ENCODE measurements at regions of chr16 and their contacts with region 1.

Region 1: GRCh38 chr16:20598832-20599469 is 22.8 kb upstream of the ACSM2B start:
- DNase-seq: no peak
- ATAC-seq: no peak
- H3K4me3 ChIP-seq: no peak overlapping the region
- H3K27ac ChIP-seq: no peak overlapping the region
- H3K4me1 ChIP-seq: no peaks in the 10 kb centered on the region
- H3K27me3 ChIP-seq: no peaks in the 10 kb centered on the region
- CTCF ChIP-seq: no peak
- EP300 ChIP-seq: no peak
- POLR2A ChIP-seq: no peak
- RAD21 ChIP-seq: no peak

Region 2: DNA sequence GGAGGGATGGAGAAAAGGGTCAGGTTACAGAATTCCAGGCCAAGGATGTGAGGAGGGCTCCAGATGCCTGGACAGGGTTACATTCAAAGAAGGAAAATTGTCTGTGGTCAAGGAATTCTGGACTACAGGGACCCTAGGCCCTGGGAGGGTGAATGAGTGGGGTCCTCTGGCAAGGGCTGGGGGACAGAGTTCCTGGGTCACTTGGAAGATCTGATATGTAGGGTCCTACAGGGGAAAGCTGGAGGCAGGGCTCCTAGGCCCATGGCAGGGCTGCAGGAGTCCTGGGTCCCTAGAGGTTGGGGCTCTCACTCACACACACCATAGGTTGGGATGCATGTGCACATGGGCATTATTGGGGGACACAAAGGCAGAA is 23.5 kb after region 1 on chr16:
- CTCF ChIA-PET with region 1: no interaction called
- POLR2A ChIA-PET with region 1: no interaction called
- RAD21 ChIA-PET with region 1: no interaction called
- SMC1A ChIA-PET with region 1: no interaction called
- in situ Hi-C with region 1: no loop called
- intact Hi-C with region 1: no loop called
- DNase-seq: no peak
- ATAC-seq: no peak
- H3K4me3 ChIP-seq: no peak overlapping the region
- H3K27ac ChIP-seq: no peak overlapping the region
- H3K4me1 ChIP-seq: no peaks in the 10 kb centered on the region
- H3K27me3 ChIP-seq: no peaks in the 10 kb centered on the region
- CTCF ChIP-seq: no peak
- EP300 ChIP-seq: no peak
- POLR2A ChIP-seq: no peak
- RAD21 ChIP-seq: no peak

Region 3: GRCh38 chr16:20689668-20690067 is 90.7 kb after region 1 on chr16:
- CTCF ChIA-PET with region 1: interaction called, 4 read pairs
- POLR2A ChIA-PET with region 1: no interaction called
- RAD21 ChIA-PET with region 1: no interaction called
- SMC1A ChIA-PET with region 1: no interaction called
- in situ Hi-C with region 1: no loop called
- intact Hi-C with region 1: loop called (anchors 5 kb)
- DNase-seq: no peak
- ATAC-seq: no peak
- H3K4me3 ChIP-seq: no peak overlapping the region
- H3K27ac ChIP-seq: no peak overlapping the region
- H3K4me1 ChIP-seq: no peaks in the 10 kb centered on the region
- H3K27me3 ChIP-seq: no peaks in the 10 kb centered on the region
- CTCF ChIP-seq: no peak
- EP300 ChIP-seq: no peak
- POLR2A ChIP-seq: no peak
- RAD21 ChIP-seq: no peak

Region 4: DNA sequence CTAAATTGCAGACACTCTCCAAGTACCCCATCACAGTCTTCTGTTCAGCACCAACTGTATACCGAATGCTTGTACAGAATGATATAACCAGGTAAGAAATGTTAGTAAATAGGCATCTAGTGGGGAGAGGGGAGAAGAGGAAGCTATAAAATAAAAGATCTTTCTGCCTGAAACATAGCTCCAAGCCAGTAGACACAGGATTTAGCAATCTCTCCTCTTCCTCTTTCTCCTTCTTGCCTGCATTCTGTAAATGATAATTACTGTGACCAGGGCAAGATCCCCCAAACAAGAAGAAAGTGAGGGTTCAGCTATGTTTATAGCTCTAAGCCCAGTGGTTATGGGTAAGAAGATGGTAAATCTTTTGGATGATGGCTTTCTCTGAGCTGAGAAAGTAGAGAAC is 182.7 kb after region 1 on chr16:
- CTCF ChIA-PET with region 1: no interaction called
- POLR2A ChIA-PET with region 1: no interaction called
- RAD21 ChIA-PET with region 1: no interaction called
- SMC1A ChIA-PET with region 1: no interaction called
- in situ Hi-C with region 1: no loop called
- intact Hi-C with region 1: no loop called
- DNase-seq: no peak
- ATAC-seq: no peak
- H3K4me3 ChIP-seq: no peak overlapping the region
- H3K27ac ChIP-seq: no peak overlapping the region
- H3K4me1 ChIP-seq: no peaks in the 10 kb centered on the region
- H3K27me3 ChIP-seq: no peaks in the 10 kb centered on the region
- CTCF ChIP-seq: no peak
- EP300 ChIP-seq: no peak
- POLR2A ChIP-seq: no peak
- RAD21 ChIP-seq: no peak